AG04449 (cell line): ENCODE measurements at regions of chr5 and their contacts with region 1.

Region 1: GRCh38 chr5:141564216-141564692 is 54.5 kb downstream of the DIAPH1 start:
- DNase-seq: peak; percentile 88
- H3K4me3 ChIP-seq: no peak overlapping the region
- CTCF ChIP-seq: peak; percentile 56

Region 2: DNA sequence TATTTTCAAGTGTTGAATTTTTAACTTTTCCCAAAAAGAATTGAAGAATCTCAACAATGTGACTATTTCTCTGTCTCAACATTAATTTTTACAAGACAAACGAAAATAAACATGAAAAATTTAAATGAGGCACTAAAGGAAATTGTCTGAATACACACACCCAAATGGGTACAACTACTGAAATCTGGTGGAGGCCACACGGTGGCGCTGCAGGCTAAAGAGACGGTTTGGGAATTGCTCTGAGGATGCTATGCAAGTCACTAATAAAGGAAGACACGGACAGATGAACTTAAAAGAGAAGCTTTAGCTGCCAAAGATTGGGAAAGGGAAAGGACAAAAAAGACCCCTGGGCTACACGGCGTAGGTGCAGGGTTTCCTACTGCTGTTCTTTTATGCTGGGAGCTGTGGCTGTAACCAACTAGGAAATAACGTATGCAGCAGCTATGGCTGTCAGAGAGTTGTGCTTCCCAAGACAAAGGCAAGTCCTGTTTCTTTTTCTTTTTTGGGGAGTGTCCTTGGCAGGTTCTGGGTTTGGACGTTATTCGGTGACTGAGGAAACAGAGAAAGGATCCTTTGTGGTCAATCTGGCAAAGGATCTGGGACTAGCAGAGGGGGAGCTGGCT is 372.0 kb before region 1 on chr5 and contains the start of gene PCDHB10:
- CTCF ChIA-PET with region 1: interaction called, 20 read pairs
- POLR2A ChIA-PET with region 1: no interaction called
- DNase-seq: no peak
- H3K4me3 ChIP-seq: peak within 1 kb of the TSS; percentile 18; the same call in 1 of the 2 replicates
- CTCF ChIP-seq: peak; percentile 14

Region 3: GRCh38 chr5:141245250-141245717 is 319.0 kb before region 1 on chr5 and contains the start of gene PCDHB15:
- CTCF ChIA-PET with region 1: interaction called, 13 read pairs
- POLR2A ChIA-PET with region 1: no interaction called
- DNase-seq: no peak
- H3K4me3 ChIP-seq: peak within 1 kb of the TSS; percentile 6; the same call in 1 of the 2 replicates
- CTCF ChIP-seq: no peak

Region 4: DNA sequence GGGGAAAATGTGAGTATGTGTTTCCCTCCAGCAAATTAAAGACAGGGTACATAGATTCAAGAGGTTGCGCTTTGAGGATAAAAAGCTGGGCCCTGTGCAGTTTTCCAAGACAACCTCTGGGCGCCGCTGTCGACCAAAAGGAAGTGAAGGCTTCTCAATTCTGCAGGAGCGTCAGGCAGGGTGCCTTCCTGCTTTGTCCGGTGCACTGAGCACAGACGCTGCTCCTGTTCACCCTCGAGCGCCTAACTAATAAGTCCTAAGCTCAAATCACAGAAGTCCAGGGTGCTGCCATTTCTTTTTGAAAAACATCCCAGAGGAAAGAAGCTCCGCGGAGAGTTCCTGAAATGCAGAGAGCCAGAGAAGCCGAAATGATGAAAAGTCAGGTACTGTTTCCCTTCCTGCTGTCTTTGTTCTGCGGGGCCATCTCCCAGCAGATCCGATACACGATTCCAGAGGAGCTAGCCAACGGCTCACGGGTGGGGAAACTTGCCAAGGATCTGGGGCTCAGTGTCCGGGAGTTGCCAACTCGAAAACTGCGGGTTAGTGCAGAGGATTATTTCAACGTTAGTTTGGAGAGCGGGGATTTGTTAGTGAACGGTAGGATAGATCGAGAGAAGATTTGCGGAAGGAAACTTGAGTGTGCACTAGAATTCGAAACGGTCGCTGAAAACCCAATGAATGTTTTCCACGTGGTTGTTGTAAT is 214.2 kb before region 1 on chr5 and contains the start of gene PCDHGB1:
- CTCF ChIA-PET with region 1: interaction called, 134 read pairs
- POLR2A ChIA-PET with region 1: no interaction called
- DNase-seq: no peak
- H3K4me3 ChIP-seq: peak within 1 kb of the TSS; percentile 39
- CTCF ChIP-seq: peak; percentile 50

Region 5: DNA sequence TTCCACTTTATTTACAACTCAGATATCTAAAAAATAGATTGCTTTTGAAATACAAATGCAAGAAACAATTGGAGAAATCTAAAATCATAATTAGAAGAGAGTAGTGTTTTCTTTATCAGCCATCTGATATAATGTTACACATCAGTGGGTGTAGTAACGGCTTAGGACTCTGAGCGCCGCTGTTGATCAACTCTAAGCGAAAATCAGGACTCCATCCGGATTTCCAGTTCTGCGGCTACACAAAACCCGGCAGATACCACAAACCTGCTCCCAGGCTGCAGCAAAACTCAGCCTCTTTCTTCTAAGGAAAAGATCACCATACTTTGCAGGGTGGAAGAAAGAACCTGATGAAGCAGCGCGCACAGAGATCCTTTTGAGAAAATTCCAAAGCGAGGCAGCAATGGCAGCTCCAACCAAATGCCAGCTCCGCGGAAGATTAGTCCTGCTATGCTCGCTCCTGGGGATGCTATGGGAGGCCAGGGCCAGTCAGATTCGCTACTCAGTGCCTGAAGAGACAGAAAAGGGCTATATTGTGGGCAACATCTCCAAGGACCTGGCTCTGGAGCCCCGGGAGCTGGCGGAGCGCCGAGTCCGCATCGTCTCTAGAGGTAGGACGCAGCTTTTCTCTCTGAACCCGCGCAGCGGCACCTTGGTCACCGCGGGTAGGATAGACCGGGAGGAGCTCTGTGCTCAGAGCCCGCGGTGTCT is 161.5 kb before region 1 on chr5 and contains the start of gene PCDHGA9:
- CTCF ChIA-PET with region 1: interaction called, 50 read pairs
- POLR2A ChIA-PET with region 1: interaction called, 3 read pairs
- DNase-seq: no peak
- H3K4me3 ChIP-seq: peak within 1 kb of the TSS; percentile 34
- CTCF ChIP-seq: no peak

Region 6: DNA sequence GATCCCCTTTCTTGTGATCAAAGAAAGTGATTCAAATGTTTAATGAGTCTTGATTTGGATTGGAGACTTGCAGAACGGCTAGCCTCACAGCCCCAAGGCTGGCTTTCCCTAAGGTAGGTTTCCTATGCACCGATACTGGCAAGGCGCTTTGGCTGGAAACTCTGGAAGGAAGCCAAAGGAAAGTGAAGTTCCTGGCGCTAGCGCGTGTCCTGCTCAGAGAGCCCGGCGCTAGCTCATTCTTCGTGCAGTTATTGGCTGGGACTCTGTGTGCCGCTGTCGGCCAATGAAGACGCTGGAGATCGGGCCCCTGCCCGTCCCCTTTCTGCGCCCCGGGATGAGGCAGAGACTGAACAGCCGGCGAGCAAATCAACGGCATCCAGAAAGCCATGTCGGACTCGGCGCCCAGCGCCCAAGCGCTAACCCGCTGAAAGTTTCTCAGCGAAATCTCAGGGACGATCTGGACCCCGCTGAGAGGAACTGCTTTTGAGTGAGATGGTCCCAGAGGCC is 88.6 kb before region 1 on chr5 and contains the start of gene PCDHGC3:
- CTCF ChIA-PET with region 1: interaction called, 99 read pairs
- POLR2A ChIA-PET with region 1: no interaction called
- DNase-seq: peak; percentile 77
- H3K4me3 ChIP-seq: peak within 1 kb of the TSS; percentile 84
- CTCF ChIP-seq: peak; percentile 50

Region 7: DNA sequence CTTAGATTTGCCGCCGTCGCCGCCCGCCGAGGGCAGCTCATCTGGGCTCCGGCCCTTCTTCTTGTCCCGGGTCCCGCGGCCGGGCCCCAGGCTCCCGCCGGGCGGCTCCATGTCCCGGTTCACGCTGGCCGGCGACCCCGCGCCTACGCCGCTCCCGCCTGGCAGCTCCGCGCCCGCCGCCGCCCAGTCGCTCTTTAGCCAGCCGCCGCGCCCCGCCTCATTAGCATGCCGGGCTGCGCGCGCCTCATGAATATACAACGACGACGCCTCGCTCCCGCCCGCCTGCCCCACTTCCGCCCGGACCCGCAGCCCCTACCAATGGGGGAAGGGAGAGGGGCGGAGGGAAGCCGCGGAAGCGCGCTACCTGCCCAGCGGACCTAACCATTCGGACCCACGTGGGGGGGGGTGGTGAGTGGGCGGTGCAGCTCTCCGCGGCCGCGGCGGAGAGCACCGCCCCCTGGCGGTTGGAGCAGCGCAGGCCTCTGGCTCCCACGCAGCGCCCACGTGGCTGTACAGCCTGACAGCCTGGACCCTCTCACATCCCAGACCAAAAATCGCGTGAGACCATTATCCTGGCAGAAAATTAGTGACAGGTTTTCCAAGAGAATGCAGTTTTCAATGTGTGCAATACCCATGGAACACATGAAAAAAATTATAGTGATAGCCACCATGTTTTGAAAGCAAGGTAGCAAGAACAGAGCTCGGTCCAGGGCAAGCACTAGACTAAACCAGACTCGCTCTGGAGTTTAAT is 54.7 kb after region 1 on chr5 and contains the start of gene DIAPH1:
- CTCF ChIA-PET with region 1: interaction called, 13 read pairs
- POLR2A ChIA-PET with region 1: interaction called, 3 read pairs
- DNase-seq: peak; percentile 46
- H3K4me3 ChIP-seq: peak within 1 kb of the TSS; percentile 74
- CTCF ChIP-seq: peak; percentile 99